Activated naive CD4-positive, alpha-beta T cell treated with anti-CD3 and anti-CD28 coated beads for 36 hours (primary cell): ENCODE measurements at regions of chr2 and their contacts with region 1.

Region 1: DNA sequence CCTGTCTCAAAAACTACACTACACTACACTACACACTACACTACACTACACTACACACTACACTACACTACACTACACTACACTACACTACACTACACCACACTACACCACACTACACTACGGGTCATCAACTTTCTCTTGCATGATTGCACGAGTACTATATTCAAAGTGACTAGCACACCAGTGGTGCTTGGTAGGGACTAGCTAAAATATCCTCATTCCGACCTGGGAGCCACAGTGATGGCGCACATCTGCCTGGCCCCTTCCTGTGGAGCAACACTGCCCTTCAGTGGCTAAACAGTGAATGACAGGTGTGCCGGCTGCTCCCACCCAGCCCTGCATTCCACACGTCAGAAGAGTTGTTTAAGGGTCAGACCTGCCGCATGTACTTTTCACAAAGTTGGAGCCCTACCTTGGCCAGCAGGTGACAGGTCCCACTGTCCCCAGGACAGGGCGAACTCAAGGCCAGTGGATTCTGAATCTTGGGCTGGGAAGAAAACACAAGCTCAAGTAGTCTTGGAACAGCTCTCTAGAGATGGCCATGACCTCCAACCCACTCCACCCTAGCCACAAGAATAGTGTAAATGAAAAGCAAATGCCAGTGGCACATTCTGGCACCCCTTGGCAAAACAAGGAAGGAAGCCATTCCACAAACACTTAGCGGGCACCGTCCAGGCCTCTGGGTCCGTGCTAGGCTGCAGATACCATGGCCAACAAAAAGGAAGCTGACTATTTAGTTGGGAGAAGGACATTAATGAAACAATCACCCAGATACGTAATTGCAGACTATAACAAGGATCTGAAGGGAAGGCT is 79.7 kb upstream of the MSH2 start:
- DNase-seq: peak; percentile 79
- H3K4me3 Mint-ChIP-seq: no peak overlapping the region
- H3K27ac Mint-ChIP-seq: no peak overlapping the region
- H3K4me1 Mint-ChIP-seq: no peaks in the 10 kb centered on the region
- H3K27me3 Mint-ChIP-seq: peaks cover 1% of the 10 kb centered on the region

Region 2: DNA sequence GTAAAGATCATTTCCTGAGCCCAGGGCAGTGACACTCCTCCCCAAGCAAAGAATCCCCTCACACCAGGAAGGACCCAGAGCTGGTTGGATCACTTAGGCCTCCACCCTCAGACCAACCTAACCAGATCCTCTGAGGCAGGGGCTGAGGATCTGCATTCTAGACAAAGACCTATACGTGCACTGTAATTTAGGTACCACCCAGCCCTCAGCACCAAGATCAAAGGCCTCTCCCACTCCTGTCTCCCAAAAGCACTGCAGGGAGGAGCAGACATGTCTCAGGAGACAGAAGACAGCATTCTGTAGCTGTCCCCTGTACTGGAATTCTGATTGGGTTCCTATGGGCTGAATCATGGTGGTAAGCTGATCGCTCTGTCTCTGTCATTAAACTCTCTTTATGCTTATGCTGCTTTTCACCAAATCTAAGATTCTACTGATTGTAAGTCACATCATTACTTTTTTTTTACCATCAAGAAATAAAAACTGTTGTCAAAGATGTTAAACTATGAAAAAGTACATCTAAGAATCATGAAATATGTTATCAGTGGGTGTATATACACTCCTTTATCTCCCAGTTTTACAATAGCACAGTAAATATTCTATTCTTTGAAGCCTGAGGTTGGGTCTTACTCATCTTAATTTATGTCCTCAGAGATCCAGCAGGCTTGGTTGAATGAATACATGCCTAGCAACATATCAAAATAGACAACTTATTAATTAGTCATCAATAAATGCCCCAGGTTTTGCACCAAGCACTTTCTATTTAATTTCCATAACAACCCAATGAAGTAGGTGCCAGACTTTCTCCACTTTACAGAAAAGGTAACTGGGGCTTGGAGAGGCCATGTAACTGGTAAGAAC is 436.0 kb before region 1 on chr2:
- CTCF ChIA-PET with region 1: interaction called, 5 read pairs
- intact Hi-C with region 1: loop called (anchors 1 kb)
- DNase-seq: no peak
- H3K4me3 Mint-ChIP-seq: no peak overlapping the region
- H3K27ac Mint-ChIP-seq: peak overlapping the region; percentile 86
- H3K4me1 Mint-ChIP-seq: peaks cover 21% of the 10 kb centered on the region
- H3K27me3 Mint-ChIP-seq: no peaks in the 10 kb centered on the region

Region 3: DNA sequence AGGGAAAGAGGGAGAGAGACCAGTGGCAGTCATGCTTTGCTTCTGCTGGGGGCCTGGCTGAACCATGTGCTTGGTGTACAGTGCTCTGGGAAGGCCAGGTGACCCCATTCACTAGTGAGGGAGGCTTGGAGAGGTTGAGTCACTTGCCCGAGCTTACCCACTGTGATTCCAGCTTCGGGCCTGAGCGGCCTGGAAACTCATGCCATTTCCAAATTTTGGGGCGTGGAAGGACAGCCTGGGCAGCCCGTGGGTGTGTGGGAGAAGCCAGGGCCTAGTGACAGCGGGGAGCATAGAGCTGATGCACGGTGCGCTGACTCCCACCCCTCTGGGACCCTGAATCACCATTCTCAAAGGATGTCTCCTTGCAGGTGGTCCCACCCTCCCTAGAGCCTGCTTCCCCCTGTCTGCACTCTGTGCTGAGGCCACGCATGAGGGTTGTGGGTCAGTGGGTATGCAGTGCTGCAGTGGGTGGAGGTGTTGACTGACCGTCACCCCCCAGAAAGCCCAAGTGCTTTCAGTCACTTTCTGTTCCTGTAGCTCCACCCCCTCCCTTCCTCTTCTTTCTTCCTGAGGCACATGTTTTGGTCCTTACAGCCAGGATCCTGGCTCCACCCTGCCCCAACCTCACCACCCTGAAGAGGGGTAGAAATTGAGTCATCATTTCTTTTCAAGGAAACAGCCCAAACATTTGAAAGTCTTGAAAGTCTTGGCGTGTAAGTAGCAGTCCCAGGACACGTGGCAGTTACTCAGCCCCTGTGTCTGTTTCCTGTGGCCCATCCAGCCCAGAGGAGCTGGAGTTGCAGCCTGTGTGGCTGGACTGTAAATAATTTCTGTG is 338.4 kb before region 1 on chr2:
- CTCF ChIA-PET with region 1: interaction called, 16 read pairs
- intact Hi-C with region 1: no loop called
- DNase-seq: peak; percentile 84
- H3K4me3 Mint-ChIP-seq: peak overlapping the region; percentile 8
- H3K27ac Mint-ChIP-seq: peak overlapping the region; percentile 92
- H3K4me1 Mint-ChIP-seq: peaks cover 69% of the 10 kb centered on the region
- H3K27me3 Mint-ChIP-seq: no peaks in the 10 kb centered on the region

Region 4: DNA sequence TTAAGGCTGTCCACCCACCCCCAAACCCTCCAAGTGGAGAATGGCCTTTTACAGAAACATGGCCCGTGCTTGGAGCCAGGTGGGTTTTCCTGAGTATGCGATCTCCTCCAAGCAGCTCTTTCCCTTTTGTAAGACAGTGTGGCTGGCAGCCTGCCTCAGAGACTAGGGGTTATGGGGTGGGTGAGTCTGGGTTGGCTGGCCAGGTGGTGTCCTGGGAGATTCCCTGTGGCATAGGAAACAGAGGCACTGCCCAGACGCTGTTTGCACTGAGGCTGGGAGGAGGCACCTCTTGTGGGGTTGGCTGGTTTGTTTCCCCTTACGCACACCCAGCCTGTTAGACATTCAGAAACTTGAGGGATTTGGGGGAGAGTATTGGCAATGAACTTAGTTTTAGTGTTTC is 325.3 kb before region 1 on chr2:
- CTCF ChIA-PET with region 1: no interaction called
- intact Hi-C with region 1: no loop called
- DNase-seq: no peak
- H3K4me3 Mint-ChIP-seq: no peak overlapping the region
- H3K27ac Mint-ChIP-seq: no peak overlapping the region
- H3K4me1 Mint-ChIP-seq: no peaks in the 10 kb centered on the region
- H3K27me3 Mint-ChIP-seq: no peaks in the 10 kb centered on the region

Region 5: GRCh38 chr2:47230418-47230817 is 92.8 kb before region 1 on chr2:
- CTCF ChIA-PET with region 1: no interaction called
- intact Hi-C with region 1: no loop called
- DNase-seq: no peak
- H3K4me3 Mint-ChIP-seq: no peak overlapping the region
- H3K27ac Mint-ChIP-seq: no peak overlapping the region
- H3K4me1 Mint-ChIP-seq: no peaks in the 10 kb centered on the region
- H3K27me3 Mint-ChIP-seq: no peaks in the 10 kb centered on the region

Region 6: GRCh38 chr2:47272031-47272864 is 51.0 kb before region 1 on chr2:
- CTCF ChIA-PET with region 1: interaction called, 10 read pairs
- intact Hi-C with region 1: no loop called
- DNase-seq: peak; percentile 48
- H3K4me3 Mint-ChIP-seq: peak overlapping the region; percentile 50
- H3K27ac Mint-ChIP-seq: no peak overlapping the region
- H3K4me1 Mint-ChIP-seq: peaks cover 2% of the 10 kb centered on the region
- H3K27me3 Mint-ChIP-seq: no peaks in the 10 kb centered on the region